Activated CD4-positive, alpha-beta T cell treated with anti-CD3 and anti-CD28 coated beads, Interleukin-2, amount 10 ng/mL, durations not matched to agents 7 days and 5 days (primary cell): ENCODE measurements at regions of chr11 and their contacts with region 1.

Region 1: DNA sequence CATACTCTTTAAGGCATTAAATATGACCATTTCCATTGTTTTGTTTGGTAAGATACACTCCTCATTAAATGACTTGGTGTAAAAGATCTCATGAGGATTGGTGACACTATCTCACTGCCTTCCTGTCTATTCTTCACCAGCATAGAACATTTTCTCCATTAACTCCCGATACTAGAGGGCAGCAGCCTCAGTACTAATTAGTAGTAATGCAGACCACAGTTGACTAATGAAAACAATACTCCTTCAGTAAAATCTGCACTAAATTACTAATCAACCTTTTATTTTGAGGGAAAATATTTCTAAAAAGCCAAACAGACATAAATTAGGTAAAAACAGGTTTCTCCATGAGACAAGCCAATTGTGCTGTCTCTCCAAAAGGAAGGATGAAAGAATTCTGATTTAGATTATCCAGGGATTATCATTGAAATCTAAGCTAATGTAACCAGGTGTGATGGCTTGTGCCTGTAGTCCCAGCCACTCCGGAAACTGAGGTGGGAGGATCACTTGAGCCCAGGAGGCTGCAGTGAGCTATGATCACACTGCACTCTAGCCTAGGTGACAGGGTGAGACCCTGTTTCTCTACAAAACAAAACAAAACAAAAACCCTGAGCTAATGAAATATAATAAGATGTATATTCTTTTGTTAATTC is 9.4 kb downstream of the PGM2L1 start:
- DNase-seq: peak; percentile 80
- H3K4me3 Mint-ChIP-seq: no peak overlapping the region
- H3K27ac Mint-ChIP-seq: peak overlapping the region; percentile 69
- H3K4me1 Mint-ChIP-seq: peaks cover 28% of the 10 kb centered on the region
- H3K27me3 Mint-ChIP-seq: no peaks in the 10 kb centered on the region

Region 2: GRCh38 chr11:74449369-74449931 is 60.6 kb after region 1 on chr11:
- CTCF ChIA-PET with region 1: interaction called, 18 read pairs
- POLR2A ChIA-PET with region 1: no interaction called
- DNase-seq: peak; percentile 65
- H3K4me3 Mint-ChIP-seq: no peak overlapping the region
- H3K27ac Mint-ChIP-seq: no peak overlapping the region
- H3K4me1 Mint-ChIP-seq: peaks cover 2% of the 10 kb centered on the region
- H3K27me3 Mint-ChIP-seq: peaks cover 2% of the 10 kb centered on the region